ENCODE measurements at regions of chr12 and their contacts with region 1.

Region 1: DNA sequence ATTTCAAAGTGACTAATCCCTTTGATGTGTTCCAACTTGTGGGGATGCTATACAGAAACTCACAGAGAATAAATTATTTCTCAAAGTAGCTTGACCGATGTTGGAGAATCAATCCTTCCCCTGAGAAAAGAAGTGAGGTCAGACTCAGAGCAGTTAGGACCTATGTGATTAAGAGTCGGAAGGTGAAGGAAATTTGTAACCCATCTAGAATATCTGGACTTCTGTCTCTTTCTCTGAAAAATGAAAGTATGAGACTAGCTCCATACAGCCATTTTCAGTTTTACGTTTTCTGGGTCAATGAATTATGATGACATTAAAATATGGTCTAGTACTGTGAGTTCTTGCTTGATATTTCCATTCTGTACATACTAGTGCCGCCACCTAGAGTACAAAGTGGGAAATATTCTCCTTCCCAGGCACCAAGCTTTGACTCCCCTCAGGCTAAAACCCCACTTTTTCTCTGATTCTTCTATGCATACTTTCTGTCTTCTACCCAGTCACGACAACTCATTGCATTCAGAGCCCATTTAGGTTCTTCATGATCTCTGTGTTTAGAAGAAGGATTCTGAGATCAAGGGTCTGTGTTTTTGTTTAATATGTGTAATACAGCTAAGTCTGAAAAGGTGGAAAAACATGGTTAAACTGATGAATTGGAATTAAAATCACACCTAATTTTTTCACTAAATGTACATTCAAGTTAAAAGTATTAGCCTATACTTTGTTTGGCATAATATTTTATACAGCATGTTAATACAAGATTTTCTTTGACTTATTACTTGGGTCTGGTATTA is 6.9 kb upstream of the NTS start:
- DNase-seq: peak; percentile 81
- H3K4me3 ChIP-seq: no peak overlapping the region
- H3K27ac ChIP-seq: no peak overlapping the region
- H3K4me1 ChIP-seq: no peaks in the 10 kb centered on the region
- H3K27me3 ChIP-seq: no peaks in the 10 kb centered on the region
- CTCF ChIP-seq: peak; percentile 57 to 60
- POLR2A ChIP-seq: no peak

Region 2: GRCh38 chr12:85484387-85484786 is 382.8 kb before region 1 on chr12:
- CTCF ChIA-PET with region 1: interaction called, 14 read pairs
- POLR2A ChIA-PET with region 1: no interaction called
- dilution Hi-C with region 1: no loop called
- intact Hi-C with region 1: no loop called
- DNase-seq: no peak
- H3K4me3 ChIP-seq: no peak overlapping the region
- H3K27ac ChIP-seq: no peak overlapping the region
- H3K4me1 ChIP-seq: no peaks in the 10 kb centered on the region
- H3K27me3 ChIP-seq: no peaks in the 10 kb centered on the region
- CTCF ChIP-seq: no peak
- POLR2A ChIP-seq: no peak

Region 3: GRCh38 chr12:85575120-85576096 is 291.8 kb before region 1 on chr12:
- CTCF ChIA-PET with region 1: interaction called, 437 read pairs
- POLR2A ChIA-PET with region 1: no interaction called
- dilution Hi-C with region 1: no loop called
- intact Hi-C with region 1: loop called (anchors 1 kb)
- DNase-seq: peak; percentile 80
- H3K4me3 ChIP-seq: no peak overlapping the region
- H3K27ac ChIP-seq: no peak overlapping the region
- H3K4me1 ChIP-seq: peaks cover 3% of the 10 kb centered on the region
- H3K27me3 ChIP-seq: no peaks in the 10 kb centered on the region
- CTCF ChIP-seq: peak; percentile 62 to 66
- POLR2A ChIP-seq: no peak

Region 4: DNA sequence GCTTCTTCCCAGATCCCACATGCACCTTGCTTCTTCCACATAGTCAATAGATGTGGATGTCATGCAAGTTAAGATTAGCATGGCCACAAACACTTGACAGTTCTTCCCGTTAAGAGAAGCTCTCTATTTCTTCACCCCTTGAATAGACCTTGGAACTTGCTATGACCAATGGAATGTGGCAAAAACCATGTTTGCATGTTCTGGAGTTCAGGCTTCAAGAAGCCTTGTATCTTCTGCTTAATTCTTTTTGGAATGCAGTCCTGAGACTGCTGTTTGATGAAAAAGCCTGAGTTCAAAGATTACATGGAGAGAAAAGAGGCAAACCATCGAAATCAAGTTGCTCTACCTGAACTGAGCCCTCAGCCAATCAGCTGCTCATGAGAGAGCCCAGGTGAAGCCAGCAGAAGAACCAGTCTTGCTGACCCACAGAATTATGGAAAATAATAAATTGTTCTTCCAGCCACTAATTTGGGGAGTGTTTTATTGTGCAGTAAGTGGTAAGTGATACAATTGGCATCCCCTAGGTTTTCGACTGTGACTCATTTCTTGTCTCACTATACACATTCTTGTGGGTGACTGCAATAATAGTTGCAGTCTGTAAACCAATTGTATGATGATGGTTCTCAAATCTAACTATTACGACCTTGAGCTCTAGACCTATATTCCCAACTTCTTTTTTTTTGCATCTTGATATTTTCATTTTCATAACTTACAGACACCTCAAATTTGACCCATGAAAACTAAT is 43.6 kb before region 1 on chr12:
- CTCF ChIA-PET with region 1: interaction called, 23 read pairs
- POLR2A ChIA-PET with region 1: no interaction called
- dilution Hi-C with region 1: no loop called
- intact Hi-C with region 1: no loop called
- DNase-seq: peak; percentile 58
- H3K4me3 ChIP-seq: no peak overlapping the region
- H3K27ac ChIP-seq: no peak overlapping the region
- H3K4me1 ChIP-seq: peaks cover 22% of the 10 kb centered on the region
- H3K27me3 ChIP-seq: no peaks in the 10 kb centered on the region
- CTCF ChIP-seq: no peak
- POLR2A ChIP-seq: no peak

Region 5: GRCh38 chr12:85883763-85884162 is 16.6 kb after region 1 on chr12:
- CTCF ChIA-PET with region 1: interaction called, 15 read pairs
- POLR2A ChIA-PET with region 1: no interaction called
- dilution Hi-C with region 1: no loop called
- intact Hi-C with region 1: no loop called
- DNase-seq: no peak
- H3K4me3 ChIP-seq: no peak overlapping the region
- H3K27ac ChIP-seq: no peak overlapping the region
- H3K4me1 ChIP-seq: no peaks in the 10 kb centered on the region
- H3K27me3 ChIP-seq: no peaks in the 10 kb centered on the region
- CTCF ChIP-seq: no peak
- POLR2A ChIP-seq: no peak

Region 6: DNA sequence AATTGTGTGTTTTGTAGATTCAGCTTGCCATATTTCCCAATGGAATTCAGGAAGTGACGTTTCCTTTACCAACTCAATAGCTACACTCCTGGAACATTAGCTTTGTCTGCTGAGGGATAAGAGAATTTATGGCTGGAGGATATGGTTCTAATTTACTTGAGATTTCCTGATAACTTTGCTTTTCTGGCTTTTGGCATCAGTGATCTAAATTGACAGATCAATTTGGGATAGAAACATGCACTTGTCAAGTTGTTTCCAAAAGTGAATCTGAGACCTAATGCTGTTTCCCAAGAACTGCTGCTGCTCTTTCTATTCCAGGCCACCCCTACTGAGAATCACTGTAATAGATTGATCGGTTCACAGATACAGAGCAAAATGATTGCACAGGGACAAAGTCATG is 345.8 kb after region 1 on chr12:
- CTCF ChIA-PET with region 1: no interaction called
- POLR2A ChIA-PET with region 1: no interaction called
- dilution Hi-C with region 1: no loop called
- intact Hi-C with region 1: no loop called
- DNase-seq: peak; percentile 14
- H3K4me3 ChIP-seq: no peak overlapping the region
- H3K27ac ChIP-seq: no peak overlapping the region
- H3K4me1 ChIP-seq: no peaks in the 10 kb centered on the region
- H3K27me3 ChIP-seq: no peaks in the 10 kb centered on the region
- CTCF ChIP-seq: no peak
- POLR2A ChIP-seq: no peak

Measured in endothelial cell of umbilical vein (primary cell).